ENCODE measurements at regions of chr17 and their contacts with region 1.

Region 1: DNA sequence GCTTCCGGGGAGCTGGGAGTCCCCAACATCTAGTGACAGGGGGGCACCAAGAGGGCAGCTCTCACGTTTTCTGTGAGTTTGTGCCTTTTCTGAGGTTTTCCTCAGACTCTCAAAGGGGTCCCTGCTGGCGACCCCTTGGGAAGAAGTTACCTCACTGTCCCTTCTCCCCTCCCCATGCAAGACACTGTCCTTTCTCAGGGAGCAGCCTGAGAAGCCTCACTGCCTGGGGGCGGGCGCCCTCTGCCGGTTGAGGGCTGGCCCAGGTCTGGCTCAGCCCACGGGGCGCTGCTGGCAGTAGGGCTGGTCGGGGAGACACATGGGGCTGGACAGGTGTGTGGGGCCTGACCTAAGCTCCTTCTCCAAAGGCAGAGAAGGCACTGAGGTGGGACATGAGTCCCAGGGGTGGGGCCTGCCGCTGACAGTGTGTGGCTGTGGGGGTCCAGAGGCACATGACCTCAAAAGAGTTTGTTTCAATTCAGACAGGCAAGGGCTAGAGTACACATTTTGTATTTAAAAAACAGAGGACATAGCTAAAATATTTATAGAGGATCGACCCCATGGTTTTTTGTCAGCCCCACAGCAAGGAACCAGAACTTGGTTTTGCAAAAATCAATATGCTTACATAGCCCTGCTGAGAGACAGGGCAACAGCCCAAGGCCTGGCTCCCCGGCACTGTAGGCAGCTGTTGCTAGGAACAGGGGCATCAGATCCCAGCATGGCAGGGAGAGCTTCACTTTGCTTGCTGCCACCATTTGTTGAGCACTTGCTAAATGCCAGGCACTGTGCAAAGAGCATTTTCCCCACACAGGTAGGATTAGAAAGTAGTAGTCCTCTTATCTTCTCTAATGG is 18.5 kb upstream of the ALDH3A1 start:
- DNase-seq: peak; percentile 77 to 90
- H3K4me3 ChIP-seq: no peak overlapping the region
- H3K4me3 Mint-ChIP-seq: no peak overlapping the region
- H3K27ac Mint-ChIP-seq: no peak overlapping the region
- H3K4me1 ChIP-seq: 0 out of 2 replicates have a peak, but pooled peaks cover 7% of the 10 kb centered on the region
- H3K4me1 Mint-ChIP-seq: no peaks in the 10 kb centered on the region
- H3K27me3 ChIP-seq: no peaks in the 10 kb centered on the region
- H3K27me3 Mint-ChIP-seq: no peaks in the 10 kb centered on the region
- CTCF ChIP-seq: peak; percentile 97 to 99

Region 2: GRCh38 chr17:19362277-19363113 is 404.2 kb before region 1 on chr17 and contains the start of gene B9D1:
- CTCF ChIA-PET with region 1: interaction called, 7 read pairs
- POLR2A ChIA-PET with region 1: no interaction called
- intact Hi-C with region 1: loop called (anchors 2 kb)
- DNase-seq: peak; percentile 93 to 94
- H3K4me3 ChIP-seq: peak within 1 kb of the TSS; percentile 81
- H3K4me3 Mint-ChIP-seq: peak within 1 kb of the TSS; percentile 80
- H3K27ac Mint-ChIP-seq: peak within 1 kb of the TSS; percentile 68
- H3K4me1 ChIP-seq: peaks cover 6% of the 10 kb centered on the region
- H3K4me1 Mint-ChIP-seq: no peaks in the 10 kb centered on the region
- H3K27me3 ChIP-seq: no peaks in the 10 kb centered on the region
- H3K27me3 Mint-ChIP-seq: no peaks in the 10 kb centered on the region
- CTCF ChIP-seq: peak; percentile 94 to 98
- total RNA-seq, gene B9D1: 8.1 and 11.5 TPM in 2 replicates

Region 3: DNA sequence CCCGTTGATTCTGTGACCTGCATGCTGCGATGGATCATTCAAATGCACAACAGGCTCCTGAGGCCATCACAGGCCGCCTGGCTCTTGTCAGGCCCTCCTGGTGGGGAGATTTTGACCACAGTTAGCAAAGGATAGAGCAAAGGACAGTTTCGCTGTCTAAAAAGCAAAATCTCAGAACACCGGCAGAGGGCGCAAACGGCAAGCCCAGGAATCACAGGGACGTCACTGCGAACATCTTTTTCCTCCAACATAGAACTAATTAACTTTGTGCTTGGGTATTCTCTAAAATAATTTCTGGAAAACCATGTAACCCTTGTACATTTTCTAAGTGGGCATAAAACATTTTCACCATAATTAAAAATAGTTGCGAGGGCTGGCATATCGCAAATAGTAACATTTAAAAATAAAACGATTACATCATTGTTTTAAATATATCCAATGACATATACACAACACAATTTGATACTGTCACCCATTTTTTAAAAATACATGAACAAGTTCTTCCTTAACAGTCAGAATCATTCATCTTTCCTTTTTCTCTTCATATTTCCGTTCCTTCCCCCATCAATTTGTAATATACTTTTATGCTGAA is 252.7 kb before region 1 on chr17:
- CTCF ChIA-PET with region 1: interaction called, 4 read pairs
- POLR2A ChIA-PET with region 1: no interaction called
- intact Hi-C with region 1: loop called (anchors 1 kb)
- DNase-seq: peak; percentile 69 to 79
- H3K4me3 ChIP-seq: no peak overlapping the region
- H3K4me3 Mint-ChIP-seq: no peak overlapping the region
- H3K27ac Mint-ChIP-seq: no peak overlapping the region
- H3K4me1 ChIP-seq: peaks cover 6% of the 10 kb centered on the region
- H3K4me1 Mint-ChIP-seq: peaks cover 7% of the 10 kb centered on the region
- H3K27me3 ChIP-seq: no peaks in the 10 kb centered on the region
- H3K27me3 Mint-ChIP-seq: no peaks in the 10 kb centered on the region
- CTCF ChIP-seq: peak; percentile 89 to 93

Region 4: DNA sequence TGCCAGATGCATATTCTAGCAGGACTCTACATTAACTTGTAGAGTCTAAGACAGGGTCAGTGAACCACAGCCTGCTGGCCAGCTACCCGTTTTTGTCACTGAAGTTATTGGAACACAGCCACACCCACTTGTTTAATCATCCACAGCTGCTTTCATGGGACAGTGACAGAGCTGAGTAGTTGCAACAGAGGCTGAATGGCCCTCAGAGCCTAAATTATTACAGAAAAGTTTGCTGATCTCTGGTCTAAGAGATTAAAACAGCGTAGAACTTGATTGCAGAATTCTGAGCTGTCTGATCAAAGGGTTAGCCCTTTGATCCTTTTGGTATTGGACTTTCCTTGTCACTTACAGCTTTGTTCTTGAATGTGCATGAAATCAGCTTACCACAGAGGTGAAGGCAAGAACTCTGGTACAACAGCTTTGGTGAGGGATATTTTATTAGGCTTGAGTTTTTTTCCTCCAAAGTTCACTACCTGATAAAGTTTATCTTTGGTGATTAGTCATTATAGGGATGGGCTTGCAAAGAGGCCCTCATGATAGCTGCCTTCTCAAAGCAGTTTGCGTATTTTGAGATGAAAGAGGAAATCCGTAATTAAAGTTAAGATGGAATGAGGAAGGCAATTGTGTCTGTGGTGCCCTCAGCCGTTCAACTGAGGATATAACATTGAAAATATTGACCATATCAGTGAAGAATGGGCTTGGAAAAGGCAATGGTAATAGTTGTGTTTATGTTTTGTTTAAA is 94.5 kb before region 1 on chr17:
- CTCF ChIA-PET with region 1: interaction called, 11 read pairs
- POLR2A ChIA-PET with region 1: no interaction called
- intact Hi-C with region 1: no loop called
- DNase-seq: peak; percentile 75 to 80
- H3K4me3 ChIP-seq: no peak overlapping the region
- H3K4me3 Mint-ChIP-seq: peak overlapping the region; percentile 51
- H3K27ac Mint-ChIP-seq: peak overlapping the region; percentile 70
- H3K4me1 ChIP-seq: peaks cover 36% of the 10 kb centered on the region
- H3K4me1 Mint-ChIP-seq: peaks cover 35% of the 10 kb centered on the region
- H3K27me3 ChIP-seq: no peaks in the 10 kb centered on the region
- H3K27me3 Mint-ChIP-seq: no peaks in the 10 kb centered on the region
- CTCF ChIP-seq: peak; percentile 41 to 54

Region 5: DNA sequence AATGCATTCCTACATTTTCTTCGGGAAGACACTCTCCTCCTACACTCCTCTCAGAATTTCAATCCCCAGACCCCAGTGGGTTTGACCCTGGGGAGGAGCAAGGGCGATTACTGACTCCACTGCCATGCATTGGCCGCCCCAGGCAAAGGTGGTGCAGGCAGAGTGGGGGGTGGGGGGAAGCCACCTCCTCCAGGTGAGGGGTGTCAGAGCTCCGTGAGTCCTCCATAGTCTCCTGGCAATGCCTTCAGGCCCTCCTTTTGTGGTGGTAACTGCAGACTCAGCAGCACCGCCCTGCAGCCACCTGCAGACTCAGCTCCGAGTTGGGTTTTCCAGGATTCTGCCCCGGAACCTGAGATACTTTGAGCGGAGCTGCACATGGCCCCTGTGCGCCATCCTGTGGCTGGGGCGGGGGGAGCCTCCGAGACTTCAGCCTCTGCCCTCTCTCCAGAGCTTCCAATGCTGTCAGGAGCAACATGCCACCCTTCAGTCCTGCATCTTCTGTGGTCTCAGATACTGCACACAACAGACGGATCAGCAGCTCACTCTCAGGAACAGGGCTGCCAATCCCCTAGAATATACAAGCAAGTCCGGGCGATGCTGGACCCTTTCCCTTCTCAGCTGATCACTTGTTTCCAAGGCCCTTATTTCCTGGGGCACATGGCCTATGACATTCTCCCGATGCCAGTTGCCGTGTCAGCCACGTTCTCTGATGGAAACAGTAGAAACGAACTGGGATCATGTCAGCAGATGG is 47.9 kb before region 1 on chr17:
- CTCF ChIA-PET with region 1: interaction called, 5 read pairs
- POLR2A ChIA-PET with region 1: no interaction called
- intact Hi-C with region 1: loop called (anchors 5 kb)
- DNase-seq: peak in 1 of 2 experiments; percentile 45
- H3K4me3 ChIP-seq: no peak overlapping the region
- H3K4me3 Mint-ChIP-seq: no peak overlapping the region
- H3K27ac Mint-ChIP-seq: no peak overlapping the region
- H3K4me1 ChIP-seq: peaks cover 44% of the 10 kb centered on the region
- H3K4me1 Mint-ChIP-seq: peaks cover 12% of the 10 kb centered on the region
- H3K27me3 ChIP-seq: no peaks in the 10 kb centered on the region
- H3K27me3 Mint-ChIP-seq: no peaks in the 10 kb centered on the region
- CTCF ChIP-seq: peak in 1 of 2 experiments; percentile 8

Region 6: DNA sequence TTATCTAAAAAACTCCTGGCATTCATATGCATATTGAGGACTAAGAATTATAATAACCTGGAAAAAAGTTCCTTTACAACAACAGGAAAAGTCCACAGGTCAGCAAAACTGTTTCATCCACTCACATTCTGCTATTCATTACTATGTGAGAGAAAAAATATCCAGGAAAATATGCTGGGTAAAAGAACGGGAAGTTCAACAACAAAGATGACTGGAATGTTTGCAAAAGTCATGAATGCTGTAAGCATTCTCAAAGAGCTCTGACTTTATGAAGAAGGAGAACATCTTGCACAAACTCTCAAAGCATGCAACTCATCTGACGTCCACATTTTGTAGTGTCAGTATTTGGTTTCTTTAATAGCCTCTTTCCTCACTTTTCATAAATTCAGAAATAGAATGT is 38.4 kb after region 1 on chr17:
- CTCF ChIA-PET with region 1: no interaction called
- POLR2A ChIA-PET with region 1: no interaction called
- intact Hi-C with region 1: no loop called
- DNase-seq: no peak
- H3K4me3 ChIP-seq: no peak overlapping the region
- H3K4me3 Mint-ChIP-seq: no peak overlapping the region
- H3K27ac Mint-ChIP-seq: no peak overlapping the region
- H3K4me1 ChIP-seq: no peaks in the 10 kb centered on the region
- H3K4me1 Mint-ChIP-seq: peaks cover 4% of the 10 kb centered on the region
- H3K27me3 ChIP-seq: no peaks in the 10 kb centered on the region; the same call in 1 of the 2 replicates
- H3K27me3 Mint-ChIP-seq: no peaks in the 10 kb centered on the region
- CTCF ChIP-seq: no peak